K562 (cell line): ENCODE measurements at regions of chr12 and their contacts with region 1.

Region 1: GRCh38 chr12:95181103-95181502 is 36.2 kb downstream of the FGD6 start:
- DNase-seq: peak; percentile 37 to 89 (median 60)
- ATAC-seq: peak; percentile 78
- H3K4me3 ChIP-seq: no peak overlapping the region
- H3K27ac ChIP-seq: peak overlapping the region; percentile 70
- H3K4me1 ChIP-seq: peaks cover 18 to 43% of the 10 kb centered on the region in 2 experiments
- H3K27me3 ChIP-seq: no peaks in the 10 kb centered on the region
- CTCF ChIP-seq: no peak
- EP300 ChIP-seq: peak; percentile 73; the same call in 1 of the 2 replicates
- POLR2A ChIP-seq: no peak
- RAD21 ChIP-seq: no peak

Region 2: GRCh38 chr12:95102916-95103671 is 78.0 kb before region 1 on chr12:
- CTCF ChIA-PET with region 1: no interaction called
- POLR2A ChIA-PET with region 1: no interaction called
- in situ Hi-C with region 1: no loop called
- intact Hi-C with region 1: no loop called
- DNase-seq: no peak
- ATAC-seq: no peak
- H3K4me3 ChIP-seq: no peak overlapping the region
- H3K27ac ChIP-seq: no peak overlapping the region
- H3K4me1 ChIP-seq: peaks cover 0 to 9% of the 10 kb centered on the region in 2 experiments; a peak in 3 of 5 replicates
- H3K27me3 ChIP-seq: no peaks in the 10 kb centered on the region
- CTCF ChIP-seq: no peak
- EP300 ChIP-seq: no peak
- POLR2A ChIP-seq: no peak
- RAD21 ChIP-seq: no peak

Region 3: GRCh38 chr12:95204141-95204866 is 23.2 kb after region 1 on chr12:
- CTCF ChIA-PET with region 1: interaction called, 4 read pairs
- POLR2A ChIA-PET with region 1: interaction called, 4 read pairs
- in situ Hi-C with region 1: no loop called
- intact Hi-C with region 1: loop called (anchors 2 kb)
- DNase-seq: peak; percentile 80 to 94 (median 86)
- ATAC-seq: peak; percentile 88
- H3K4me3 ChIP-seq: peak overlapping the region; percentile 33
- H3K27ac ChIP-seq: peak overlapping the region; percentile 94
- H3K4me1 ChIP-seq: peaks cover 29 to 55% of the 10 kb centered on the region in 2 experiments
- H3K27me3 ChIP-seq: no peaks in the 10 kb centered on the region
- CTCF ChIP-seq: no peak
- EP300 ChIP-seq: peak; percentile 78
- POLR2A ChIP-seq: peak; percentile 66
- RAD21 ChIP-seq: peak in 1 of 2 experiments; percentile 12; a peak in 1 of 4 replicates

Region 4: GRCh38 chr12:95446506-95446900 is 265.4 kb after region 1 on chr12:
- CTCF ChIA-PET with region 1: no interaction called
- POLR2A ChIA-PET with region 1: no interaction called
- in situ Hi-C with region 1: no loop called
- intact Hi-C with region 1: no loop called
- DNase-seq: peak in 3 of 4 experiments; percentile 18 to 40 (median 30)
- ATAC-seq: peak; percentile 63
- H3K4me3 ChIP-seq: no peak overlapping the region
- H3K27ac ChIP-seq: no peak overlapping the region
- H3K4me1 ChIP-seq: peaks cover 0 to 4% of the 10 kb centered on the region in 2 experiments; a peak in 2 of 5 replicates
- H3K27me3 ChIP-seq: peaks cover 4 to 11% of the 10 kb centered on the region in 2 experiments; a peak in 4 of 5 replicates
- CTCF ChIP-seq: no peak
- EP300 ChIP-seq: no peak
- POLR2A ChIP-seq: no peak
- RAD21 ChIP-seq: no peak